HEK293 (cell line): ENCODE measurements at regions of chr14 and their contacts with region 1.

Region 1: DNA sequence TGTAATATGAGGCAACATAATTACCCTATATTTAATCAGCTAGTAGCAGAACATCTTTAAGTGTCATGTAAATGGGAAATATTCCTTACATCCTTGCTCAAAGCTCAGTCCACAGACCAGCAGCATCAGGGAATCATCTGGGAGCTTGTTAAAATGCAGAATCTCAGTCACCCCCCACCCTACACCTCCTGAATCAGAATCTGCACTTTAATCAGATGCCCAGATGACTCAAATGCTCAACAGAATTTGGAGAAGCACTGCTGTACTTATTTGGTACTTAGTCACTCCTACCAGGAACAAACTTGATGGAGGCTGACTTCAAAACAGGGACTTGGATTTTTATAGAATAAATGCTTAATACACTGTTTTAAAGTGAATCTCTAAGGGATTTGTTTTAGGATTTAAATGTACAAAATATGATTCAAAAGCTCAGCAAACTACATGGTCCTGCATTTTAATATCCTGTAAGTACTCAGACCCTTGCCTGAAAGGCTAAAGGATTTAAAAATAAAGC is 96.5 kb downstream of the ARMH4 start:
- H3K4me3 ChIP-seq: no peak overlapping the region
- H3K27ac ChIP-seq: no peak overlapping the region
- H3K4me1 ChIP-seq: no peaks in the 10 kb centered on the region
- CTCF ChIP-seq: no peak

Region 2: DNA sequence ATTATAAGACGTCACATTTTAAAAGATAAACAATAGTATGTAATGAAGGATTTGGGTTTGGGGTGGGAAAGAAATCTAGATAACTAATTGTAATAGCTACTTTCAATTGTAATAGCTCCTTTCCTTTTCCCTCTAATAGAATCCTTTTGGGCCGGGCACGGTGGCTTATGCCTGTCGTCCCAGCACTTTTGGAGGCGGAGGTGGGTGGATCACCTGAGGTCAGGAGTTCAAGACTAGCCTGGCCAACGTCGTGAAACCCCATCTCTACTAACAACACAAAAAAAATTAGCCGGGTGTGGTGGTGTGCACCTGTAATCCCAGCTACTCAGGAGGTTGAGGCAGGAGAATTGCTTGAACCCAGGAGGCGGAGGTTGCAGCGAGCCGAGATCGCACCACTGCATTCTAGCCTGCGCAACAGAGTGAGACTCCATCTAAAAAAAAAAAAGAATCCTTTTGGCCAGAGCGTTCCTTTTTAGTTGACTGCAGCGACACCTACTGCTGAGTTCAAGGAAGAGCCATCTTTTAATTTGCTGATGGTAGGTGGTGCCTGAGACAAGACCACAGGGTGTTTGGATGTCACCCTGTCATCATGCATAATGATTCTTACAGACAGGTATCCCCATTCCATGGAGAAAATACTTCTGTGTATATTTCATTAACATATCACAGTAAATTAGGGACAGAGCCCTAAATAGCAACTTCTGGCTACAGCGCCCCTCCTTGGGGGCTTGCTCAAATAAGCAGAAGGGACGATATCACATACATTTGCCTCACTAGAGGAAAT is 16.9 kb after region 1 on chr14:
- CTCF ChIA-PET with region 1: interaction called, 10 read pairs
- POLR2A ChIA-PET with region 1: no interaction called
- H3K4me3 ChIP-seq: no peak overlapping the region
- H3K27ac ChIP-seq: no peak overlapping the region
- H3K4me1 ChIP-seq: no peaks in the 10 kb centered on the region
- CTCF ChIP-seq: peak; percentile 35; the same call in 1 of the 2 replicates

Region 3: DNA sequence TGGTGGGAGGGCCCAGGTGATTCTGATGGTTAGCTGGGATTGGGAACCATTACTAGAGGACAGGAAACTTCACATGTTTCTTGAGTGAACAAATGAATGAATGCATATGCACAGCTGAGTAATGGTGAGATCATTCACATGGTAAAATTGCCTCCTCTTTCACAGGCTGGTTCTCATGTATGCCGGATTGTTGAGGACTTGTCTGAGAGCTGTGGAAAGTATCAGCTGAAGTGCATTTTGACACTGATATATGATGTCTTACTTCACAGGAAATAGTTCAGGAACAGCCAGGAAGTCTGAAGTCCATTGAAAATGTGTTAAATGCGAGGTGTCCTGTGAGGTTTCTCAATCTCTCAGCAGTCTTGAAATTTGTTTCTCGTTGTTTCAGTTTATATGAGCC is 504.7 kb after region 1 on chr14:
- CTCF ChIA-PET with region 1: no interaction called
- POLR2A ChIA-PET with region 1: no interaction called
- H3K4me3 ChIP-seq: no peak overlapping the region
- H3K27ac ChIP-seq: no peak overlapping the region
- H3K4me1 ChIP-seq: no peaks in the 10 kb centered on the region
- CTCF ChIP-seq: no peak